Activated naive CD4-positive, alpha-beta T cell treated with anti-CD3 and anti-CD28 coated beads for 36 hours (primary cell): ENCODE measurements at regions of chr9 and their contacts with region 1.

Region 1: DNA sequence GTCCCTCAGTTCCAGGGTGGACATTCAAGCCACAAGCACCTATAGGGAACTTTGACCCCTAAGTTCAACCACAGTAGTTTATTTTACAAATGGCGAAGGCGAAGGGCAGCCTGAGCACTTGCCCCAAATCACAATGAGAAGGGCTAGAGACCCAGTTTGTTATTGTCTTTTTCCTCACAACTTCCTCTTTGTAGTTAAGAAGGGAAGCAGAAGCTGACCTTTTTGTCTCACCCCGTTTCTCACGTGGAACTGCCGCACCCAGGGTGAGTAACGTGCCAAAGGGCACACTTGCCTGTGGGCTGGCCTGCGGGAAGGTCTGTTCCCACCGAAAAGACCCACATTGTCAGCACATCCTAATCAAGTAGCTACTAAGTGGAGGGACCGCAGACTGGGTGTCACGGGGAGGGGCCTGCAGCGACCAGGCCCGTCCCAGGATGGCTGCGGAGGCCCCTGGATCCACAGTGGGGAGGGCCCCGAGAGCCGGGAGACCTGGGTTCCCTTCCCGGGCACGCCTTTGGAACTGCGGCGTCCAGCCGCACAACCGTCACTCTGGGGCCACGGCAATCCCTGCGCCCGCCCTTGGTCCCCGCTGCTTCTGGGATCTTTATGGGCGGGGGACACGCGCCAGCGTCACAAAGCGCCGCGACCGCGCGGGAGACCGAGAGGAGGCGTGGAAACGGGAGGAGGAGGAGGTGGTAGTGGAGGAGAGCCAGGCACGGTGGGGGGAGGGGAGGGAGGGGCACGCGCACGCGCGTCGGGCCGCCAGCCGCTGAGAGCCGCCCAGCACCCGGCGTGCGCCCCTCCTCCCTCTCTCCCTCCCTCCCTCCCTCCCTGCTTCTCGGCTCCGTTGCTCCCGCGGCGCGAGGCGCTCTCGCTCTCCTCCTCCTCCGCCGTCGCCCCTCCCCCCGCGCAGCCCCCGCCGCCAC is at the start of gene UBE2R2:
- DNase-seq: peak; percentile 94
- H3K4me3 Mint-ChIP-seq: peak within 1 kb of the TSS; percentile 93
- H3K27ac Mint-ChIP-seq: peak within 1 kb of the TSS; percentile 96
- H3K4me1 Mint-ChIP-seq: peaks cover 51% of the 10 kb centered on the region
- H3K27me3 Mint-ChIP-seq: no peaks in the 10 kb centered on the region
- total RNA-seq, gene UBE2R2: 44.2 to 46.9 TPM

Region 2: GRCh38 chr9:33159760-33160127 is 656.8 kb before region 1 on chr9:
- CTCF ChIA-PET with region 1: no interaction called
- intact Hi-C with region 1: loop called (anchors 5 kb)
- DNase-seq: peak; percentile 87
- H3K4me3 Mint-ChIP-seq: peak overlapping the region; percentile 64
- H3K27ac Mint-ChIP-seq: peak overlapping the region; percentile 97
- H3K4me1 Mint-ChIP-seq: peaks cover 92% of the 10 kb centered on the region
- H3K27me3 Mint-ChIP-seq: no peaks in the 10 kb centered on the region

Region 3: DNA sequence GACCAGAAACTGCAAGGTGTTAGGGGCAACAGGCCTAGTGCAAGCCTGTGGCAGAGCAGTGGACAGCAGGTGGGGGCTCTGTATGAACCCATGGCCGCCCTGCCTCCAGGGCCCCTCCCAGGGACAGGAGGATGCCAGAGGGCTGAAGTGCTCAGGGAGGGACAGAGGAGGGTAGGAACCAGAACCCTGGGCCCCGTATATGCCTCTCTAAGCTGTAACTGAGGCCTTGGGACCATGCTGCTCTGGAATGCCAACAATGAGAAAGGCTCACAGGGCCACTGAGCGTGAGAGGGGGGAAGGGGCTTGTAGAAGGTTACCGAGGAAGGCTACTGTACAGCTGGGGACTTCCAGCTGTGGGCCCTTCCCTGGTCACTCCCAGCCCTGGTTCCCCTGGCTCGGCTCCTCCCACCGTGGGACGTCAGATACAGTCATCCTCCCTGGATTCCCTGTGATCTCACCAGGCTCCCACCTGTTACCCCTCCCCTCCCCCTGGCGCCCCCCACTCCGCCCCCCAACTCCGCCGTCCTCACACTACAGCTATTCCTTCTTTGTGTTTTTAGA is 435.3 kb before region 1 on chr9:
- CTCF ChIA-PET with region 1: no interaction called
- intact Hi-C with region 1: no loop called
- DNase-seq: no peak
- H3K4me3 Mint-ChIP-seq: no peak overlapping the region
- H3K27ac Mint-ChIP-seq: no peak overlapping the region
- H3K4me1 Mint-ChIP-seq: no peaks in the 10 kb centered on the region
- H3K27me3 Mint-ChIP-seq: no peaks in the 10 kb centered on the region

Region 4: GRCh38 chr9:33852216-33852826 is 35.7 kb after region 1 on chr9:
- CTCF ChIA-PET with region 1: interaction called, 31 read pairs
- intact Hi-C with region 1: loop called (anchors 1 kb)
- DNase-seq: peak; percentile 71
- H3K4me3 Mint-ChIP-seq: no peak overlapping the region
- H3K27ac Mint-ChIP-seq: no peak overlapping the region
- H3K4me1 Mint-ChIP-seq: peaks cover 37% of the 10 kb centered on the region
- H3K27me3 Mint-ChIP-seq: no peaks in the 10 kb centered on the region

Region 5: DNA sequence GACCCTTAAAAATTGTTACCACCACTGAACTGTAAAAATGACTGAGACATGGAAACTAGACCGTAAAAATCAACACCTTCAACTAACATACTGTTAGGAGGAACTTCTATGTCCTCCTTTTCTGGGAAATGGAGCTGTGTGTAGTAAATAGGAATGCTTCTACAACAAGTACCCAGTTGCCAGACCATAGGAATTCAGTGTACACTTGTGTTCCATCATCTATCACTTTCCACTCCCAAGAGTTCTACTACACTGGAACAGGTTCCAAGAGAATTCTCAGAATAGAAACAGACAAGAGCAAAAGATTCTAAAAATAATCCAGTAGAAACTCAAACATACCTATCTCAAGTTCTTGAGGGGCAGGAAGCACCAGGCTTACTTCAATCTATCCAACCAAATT is 208.5 kb after region 1 on chr9:
- CTCF ChIA-PET with region 1: no interaction called
- intact Hi-C with region 1: loop called (anchors 1 kb)
- DNase-seq: no peak
- H3K4me3 Mint-ChIP-seq: no peak overlapping the region
- H3K27ac Mint-ChIP-seq: no peak overlapping the region
- H3K4me1 Mint-ChIP-seq: peaks cover 13% of the 10 kb centered on the region
- H3K27me3 Mint-ChIP-seq: no peaks in the 10 kb centered on the region

Region 6: DNA sequence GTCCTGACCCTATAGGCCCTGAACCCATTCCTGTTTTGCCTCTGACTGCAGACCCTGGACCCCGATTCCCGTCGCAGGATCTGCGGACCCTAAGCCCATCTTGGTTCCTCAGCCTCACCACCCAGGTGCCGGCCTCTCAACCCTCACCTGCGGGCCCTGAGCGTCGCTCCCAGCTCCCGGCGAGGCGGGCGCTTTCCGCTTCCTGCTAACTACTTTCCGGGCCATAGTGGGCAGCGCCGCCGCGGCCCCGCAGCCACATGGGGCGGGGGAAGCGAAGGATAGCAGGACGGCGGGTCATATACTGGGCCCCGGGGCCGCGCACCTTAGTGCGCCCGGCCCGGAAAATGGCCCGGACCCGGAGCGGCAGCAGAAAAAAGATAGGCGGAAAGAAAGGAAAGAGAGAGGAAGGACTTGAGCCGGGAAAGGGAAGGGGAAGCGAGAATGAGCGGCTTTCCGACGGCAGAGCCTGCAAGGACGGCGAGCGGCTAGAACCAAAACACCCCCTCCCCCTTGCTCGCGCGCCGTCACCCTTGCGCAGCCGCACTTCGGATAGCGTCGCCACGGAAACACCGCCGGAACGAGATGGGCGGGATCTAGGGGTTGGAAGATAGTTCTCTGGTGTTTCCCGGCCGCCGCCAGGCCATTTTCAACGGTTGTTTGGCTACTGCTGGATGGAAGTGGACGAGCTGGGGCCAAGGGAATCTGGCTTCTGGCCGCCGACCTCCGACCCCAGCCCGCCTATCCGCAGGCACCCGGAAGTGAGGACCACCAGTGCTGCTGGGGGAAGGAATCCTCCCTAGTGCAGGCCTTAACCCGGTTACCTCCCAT is 309.8 kb after region 1 on chr9 and contains the start of gene DCAF12:
- CTCF ChIA-PET with region 1: no interaction called
- intact Hi-C with region 1: loop called (anchors 1 kb)
- DNase-seq: peak; percentile 94
- H3K4me3 Mint-ChIP-seq: peak within 1 kb of the TSS; percentile 93
- H3K27ac Mint-ChIP-seq: peak within 1 kb of the TSS; percentile 93
- H3K4me1 Mint-ChIP-seq: peaks cover 35% of the 10 kb centered on the region
- H3K27me3 Mint-ChIP-seq: no peaks in the 10 kb centered on the region
- total RNA-seq, gene DCAF12: 34.0 to 37.0 TPM

Region 7: GRCh38 chr9:34376596-34377403 is 560.2 kb after region 1 on chr9 and contains the start of gene MYORG:
- CTCF ChIA-PET with region 1: no interaction called
- intact Hi-C with region 1: loop called (anchors 2 kb)
- DNase-seq: peak; percentile 97
- H3K4me3 Mint-ChIP-seq: peak within 1 kb of the TSS; percentile 80
- H3K27ac Mint-ChIP-seq: no peak within 1 kb of the TSS
- H3K4me1 Mint-ChIP-seq: peaks cover 30% of the 10 kb centered on the region
- H3K27me3 Mint-ChIP-seq: no peaks in the 10 kb centered on the region
- total RNA-seq, gene MYORG: 1.1 to 2.0 TPM